Gastrocnemius medialis (tissue), 4 donors: ENCODE measurements at regions of chr1 and their contacts with region 1.

Region 1: GRCh38 chr1:42756956-42757891 is 9.6 kb downstream of the P3H1 start:
- DNase-seq: no peak
- ATAC-seq: peak in 1 of 2 donors; percentile 78
- H3K4me3 ChIP-seq: no peak overlapping the region
- H3K27ac ChIP-seq: no peak overlapping the region
- H3K4me1 ChIP-seq: no peaks in the 10 kb centered on the region
- H3K27me3 ChIP-seq: no peaks in the 10 kb centered on the region
- CTCF ChIP-seq: peak; percentile 28 to 70 (median 55)
- POLR2A ChIP-seq: no peak

Region 2: GRCh38 chr1:42576935-42577334 is 180.3 kb before region 1 on chr1:
- in situ Hi-C with region 1: no loop called
- intact Hi-C with region 1: loop called (anchors 5 kb)
- DNase-seq: no peak
- ATAC-seq: no peak
- H3K4me3 ChIP-seq: no peak overlapping the region
- H3K27ac ChIP-seq: no peak overlapping the region
- H3K4me1 ChIP-seq: no peaks in the 10 kb centered on the region
- H3K27me3 ChIP-seq: no peaks in the 10 kb centered on the region
- CTCF ChIP-seq: no peak
- POLR2A ChIP-seq: no peak

Region 3: DNA sequence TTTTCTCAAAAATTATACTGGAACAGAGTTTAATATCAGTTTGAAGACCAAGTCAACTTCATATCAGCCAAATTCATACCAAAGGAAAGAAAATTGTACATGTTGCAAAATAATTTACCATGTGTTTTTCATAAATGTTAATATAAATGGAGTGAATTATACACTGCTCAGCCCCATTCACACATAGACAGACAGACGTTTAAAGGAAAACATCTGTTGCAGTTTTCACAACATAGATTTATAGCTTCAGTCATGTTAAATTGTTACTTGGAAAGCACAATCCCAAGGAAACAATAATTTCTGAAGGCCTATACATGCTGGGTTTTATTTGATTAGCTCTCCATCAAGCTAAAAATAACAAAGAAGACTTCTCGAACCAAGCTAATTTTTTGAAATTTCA is 724.3 kb after region 1 on chr1:
- in situ Hi-C with region 1: no loop called
- intact Hi-C with region 1: no loop called
- DNase-seq: no peak
- ATAC-seq: no peak
- H3K4me3 ChIP-seq: no peak overlapping the region
- H3K27ac ChIP-seq: no peak overlapping the region
- H3K4me1 ChIP-seq: no peaks in the 10 kb centered on the region
- H3K27me3 ChIP-seq: no peaks in the 10 kb centered on the region
- CTCF ChIP-seq: no peak
- POLR2A ChIP-seq: no peak